WTC11 (cell line): ENCODE measurements at regions of chr1 and their contacts with region 1.

Region 1: DNA sequence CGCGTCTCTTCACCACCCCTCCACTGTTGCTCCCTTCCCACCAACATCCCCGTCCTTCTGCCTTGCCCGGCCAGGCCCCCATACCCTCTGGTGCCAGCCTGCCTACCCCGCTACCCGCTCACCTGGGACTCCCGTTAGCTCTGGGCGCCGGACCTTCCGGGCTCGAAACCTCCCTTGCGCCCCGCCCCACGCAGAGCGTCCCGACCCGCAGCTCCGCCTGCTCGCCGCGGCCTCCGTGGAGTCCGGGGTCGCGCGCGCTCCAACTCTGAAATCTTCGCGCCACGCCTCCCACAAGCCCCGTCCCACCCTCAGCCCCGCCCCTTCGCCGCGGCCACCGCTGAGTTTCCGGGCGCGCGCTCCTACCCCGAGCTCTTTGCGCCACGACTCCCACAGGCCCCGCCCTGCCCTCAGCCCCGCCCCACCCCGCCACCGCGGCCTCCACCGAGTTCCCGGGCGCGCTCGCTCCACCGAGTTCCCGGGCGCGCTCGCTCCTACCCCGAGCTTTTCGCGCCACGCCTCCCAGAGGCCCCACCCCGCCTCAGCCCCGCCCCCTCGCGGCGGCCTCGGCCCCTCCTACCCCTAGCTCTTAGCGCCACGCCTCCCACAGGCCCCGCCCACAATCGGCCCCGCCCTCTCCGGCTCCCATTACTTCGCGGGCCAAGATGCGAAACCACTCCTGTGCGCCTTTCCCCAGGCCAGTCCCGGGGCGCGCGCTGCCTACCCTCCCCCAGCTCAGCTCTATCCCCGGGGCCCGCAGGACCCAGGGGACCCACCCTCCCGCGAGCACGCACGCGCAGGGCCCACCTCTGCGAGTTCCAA is at the start of gene IFT25:
- DNase-seq: peak; percentile 97
- ATAC-seq: peak; percentile 83
- H3K4me3 Mint-ChIP-seq: peak within 1 kb of the TSS; percentile 87
- H3K27ac Mint-ChIP-seq: peak within 1 kb of the TSS; percentile 68; the same call in 1 of the 2 replicates
- H3K4me1 Mint-ChIP-seq: peaks cover 55% of the 10 kb centered on the region
- H3K27me3 Mint-ChIP-seq: no peaks in the 10 kb centered on the region
- CTCF ChIP-seq: no peak
- total RNA-seq, gene IFT25: 22.6 to 27.9 TPM (median 26.3 TPM) in 3 replicates

Region 2: GRCh38 chr1:53526451-53527101 is 419.1 kb before region 1 on chr1:
- CTCF ChIA-PET with region 1: no interaction called
- POLR2A ChIA-PET with region 1: no interaction called
- DNase-seq: peak; percentile 27
- ATAC-seq: peak; percentile 18
- H3K4me3 Mint-ChIP-seq: no peak overlapping the region
- H3K27ac Mint-ChIP-seq: no peak overlapping the region
- H3K4me1 Mint-ChIP-seq: peaks cover 9% of the 10 kb centered on the region
- H3K27me3 Mint-ChIP-seq: peaks cover 5% of the 10 kb centered on the region
- CTCF ChIP-seq: no peak

Region 3: GRCh38 chr1:53811414-53811851 is 134.2 kb before region 1 on chr1:
- CTCF ChIA-PET with region 1: interaction called, 12 read pairs
- POLR2A ChIA-PET with region 1: no interaction called
- DNase-seq: peak; percentile 73
- ATAC-seq: peak; percentile 92
- H3K4me3 Mint-ChIP-seq: no peak overlapping the region
- H3K27ac Mint-ChIP-seq: peak overlapping the region; percentile 22; the same call in 1 of the 2 replicates
- H3K4me1 Mint-ChIP-seq: peaks cover 16% of the 10 kb centered on the region
- H3K27me3 Mint-ChIP-seq: no peaks in the 10 kb centered on the region; the same call in 1 of the 2 replicates
- CTCF ChIP-seq: peak; percentile 41; the same call in 1 of the 2 replicates

Region 4: DNA sequence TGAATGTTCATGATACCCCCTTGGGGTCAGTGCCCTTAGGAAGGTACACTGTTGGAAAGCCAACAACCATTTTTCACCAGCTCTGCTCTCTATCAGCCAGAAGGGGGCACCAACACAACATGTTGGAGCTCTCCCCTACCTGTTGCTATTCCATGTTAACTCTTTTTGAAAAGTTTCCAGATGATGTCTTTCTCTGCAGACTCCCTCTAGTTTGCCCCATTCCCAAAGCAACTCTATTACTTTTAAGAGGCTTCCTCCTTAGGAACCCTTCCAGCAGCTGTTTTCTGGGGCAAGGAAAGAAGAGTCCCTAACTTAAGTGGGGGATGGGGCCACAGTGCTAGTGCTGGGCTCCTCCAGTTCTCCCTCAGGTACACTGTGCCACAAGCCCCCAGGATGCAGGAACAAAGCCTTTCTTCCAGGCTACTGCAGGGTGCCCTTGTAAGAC is 84.7 kb before region 1 on chr1:
- CTCF ChIA-PET with region 1: interaction called, 48 read pairs
- POLR2A ChIA-PET with region 1: interaction called, 6 read pairs
- DNase-seq: peak; percentile 44
- ATAC-seq: peak; percentile 97
- H3K4me3 Mint-ChIP-seq: no peak overlapping the region
- H3K27ac Mint-ChIP-seq: peak overlapping the region; percentile 46
- H3K4me1 Mint-ChIP-seq: peaks cover 5% of the 10 kb centered on the region
- H3K27me3 Mint-ChIP-seq: no peaks in the 10 kb centered on the region
- CTCF ChIP-seq: peak; percentile 57

Region 5: DNA sequence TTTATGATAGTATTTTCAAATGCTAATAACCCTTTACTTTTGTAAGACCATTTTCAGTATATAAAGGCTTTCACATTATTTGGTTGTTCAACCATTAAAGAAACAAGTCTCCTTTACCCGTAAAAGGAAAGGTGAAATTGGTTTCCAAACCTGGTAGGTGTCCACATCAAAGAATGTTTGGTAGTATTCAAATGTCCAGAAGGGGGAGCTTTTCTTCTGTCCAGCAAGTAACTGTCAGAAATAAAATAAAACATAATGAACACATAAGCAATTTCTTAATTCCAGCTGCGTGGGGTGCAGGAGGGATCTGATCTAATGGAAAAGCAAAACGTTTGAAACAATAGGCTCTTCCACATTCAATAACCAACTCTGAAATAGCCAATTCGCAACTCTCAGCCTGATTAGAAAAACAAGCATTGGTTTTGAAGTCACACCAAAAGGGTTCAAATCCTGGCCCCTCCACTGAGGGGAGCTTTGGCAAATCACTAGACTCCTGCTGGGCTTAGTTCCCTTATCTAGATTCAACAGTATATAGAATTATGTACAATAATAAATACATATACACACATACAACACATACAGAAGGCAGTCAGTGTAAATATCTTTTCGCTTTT is 67.0 kb before region 1 on chr1:
- CTCF ChIA-PET with region 1: interaction called, 44 read pairs
- POLR2A ChIA-PET with region 1: interaction called, 4 read pairs
- DNase-seq: no peak
- ATAC-seq: no peak
- H3K4me3 Mint-ChIP-seq: no peak overlapping the region
- H3K27ac Mint-ChIP-seq: no peak overlapping the region
- H3K4me1 Mint-ChIP-seq: no peaks in the 10 kb centered on the region
- H3K27me3 Mint-ChIP-seq: no peaks in the 10 kb centered on the region
- CTCF ChIP-seq: 0 out of 2 replicates have a peak, but pooled peaks have one; percentile 15

Region 6: DNA sequence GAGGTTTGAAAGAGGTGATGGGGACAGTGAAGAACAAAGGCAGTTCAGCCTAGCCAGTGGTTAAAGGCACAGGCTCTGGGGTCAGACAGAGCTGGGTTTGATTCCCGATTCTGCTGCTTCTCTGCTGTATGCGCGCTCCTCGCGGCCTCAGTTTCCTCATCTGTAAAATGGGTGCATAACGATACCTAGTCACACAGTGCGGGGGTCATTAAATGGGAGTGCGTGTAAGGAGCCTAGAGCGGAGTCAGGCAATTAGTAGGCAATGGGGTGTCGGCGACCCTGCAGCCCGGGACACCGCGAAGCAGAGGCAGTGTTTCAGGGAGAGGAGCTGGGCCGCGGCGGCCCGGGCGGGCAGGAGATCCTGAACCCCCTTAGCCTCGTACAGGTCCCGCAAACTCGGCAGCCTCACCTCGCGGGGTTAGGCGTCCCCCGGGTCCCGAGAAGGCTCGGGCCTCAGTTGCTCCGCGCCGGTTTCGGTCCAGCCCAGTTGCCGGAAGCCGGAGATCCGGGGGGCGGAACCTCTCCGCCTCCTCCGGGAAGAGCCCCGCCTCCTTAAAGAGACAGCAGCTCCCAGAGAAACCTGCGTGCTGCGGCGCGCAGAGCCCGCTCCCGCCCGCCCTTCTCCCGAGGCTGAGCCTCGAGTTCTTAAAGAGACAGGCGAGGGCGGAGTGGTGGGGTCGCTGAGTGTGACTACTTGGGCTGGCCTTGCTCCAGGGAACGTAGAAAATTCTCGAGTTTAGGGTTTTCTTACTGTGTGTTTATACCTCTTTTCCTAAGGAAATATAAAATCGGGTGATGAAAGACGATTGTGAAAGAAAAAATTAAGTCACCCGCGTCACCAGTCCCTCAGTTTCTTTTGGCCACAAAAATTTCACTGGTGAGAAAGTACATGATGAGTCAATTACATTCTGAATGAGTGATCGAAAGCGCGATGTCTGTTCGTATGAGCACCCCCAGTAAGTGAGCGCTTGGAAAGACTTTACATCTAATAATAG is 56.0 kb before region 1 on chr1 and contains the start of gene YIPF1:
- CTCF ChIA-PET with region 1: interaction called, 14 read pairs
- POLR2A ChIA-PET with region 1: interaction called, 8 read pairs
- DNase-seq: peak; percentile 89
- ATAC-seq: peak; percentile 98
- H3K4me3 Mint-ChIP-seq: peak within 1 kb of the TSS; percentile 98
- H3K27ac Mint-ChIP-seq: peak within 1 kb of the TSS; percentile 98
- H3K4me1 Mint-ChIP-seq: peaks cover 10% of the 10 kb centered on the region
- H3K27me3 Mint-ChIP-seq: peaks cover 10% of the 10 kb centered on the region
- CTCF ChIP-seq: no peak
- total RNA-seq, gene YIPF1: 21.9 to 28.6 TPM (median 25.9 TPM) in 3 replicates

Region 7: DNA sequence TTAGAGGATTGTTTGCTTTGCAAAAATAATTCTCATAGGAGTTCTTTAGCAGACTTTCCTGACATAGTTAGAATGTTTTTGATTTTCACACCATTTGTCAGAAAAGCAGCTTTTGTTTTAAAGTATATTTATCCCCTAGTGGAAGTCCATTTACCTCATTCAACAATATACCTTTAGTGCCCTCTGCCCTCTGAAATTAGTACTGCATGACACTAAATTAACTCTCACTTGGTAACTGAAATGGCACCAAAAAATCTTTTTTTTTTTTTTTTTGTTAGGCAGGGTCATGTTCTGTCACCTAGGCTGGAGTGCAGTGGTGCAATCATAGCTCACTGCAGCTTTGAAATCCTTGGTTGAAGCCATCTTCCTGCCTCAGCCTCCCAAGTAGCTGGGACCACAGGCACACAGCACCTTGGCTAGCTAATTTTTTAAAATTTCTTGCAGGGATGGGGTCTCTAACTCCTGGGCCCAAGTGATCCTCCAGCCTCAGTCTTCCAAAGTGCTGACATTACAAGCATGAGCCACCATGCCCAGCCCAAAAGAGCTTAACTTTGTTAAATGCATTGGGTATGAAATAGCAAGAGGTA is 14.1 kb after region 1 on chr1:
- CTCF ChIA-PET with region 1: interaction called, 51 read pairs
- POLR2A ChIA-PET with region 1: interaction called, 4 read pairs
- DNase-seq: no peak
- ATAC-seq: no peak
- H3K4me3 Mint-ChIP-seq: no peak overlapping the region
- H3K27ac Mint-ChIP-seq: no peak overlapping the region
- H3K4me1 Mint-ChIP-seq: peaks cover 24% of the 10 kb centered on the region
- H3K27me3 Mint-ChIP-seq: no peaks in the 10 kb centered on the region
- CTCF ChIP-seq: peak; percentile 38; the same call in 1 of the 2 replicates